Activated naive CD4-positive, alpha-beta T cell treated with anti-CD3 and anti-CD28 coated beads for 36 hours (primary cell): ENCODE measurements at regions of chr10 and their contacts with region 1.

Region 1: GRCh38 chr10:22988581-22989360 is 60.9 kb downstream of the ARMC3 start:
- DNase-seq: peak; percentile 82
- H3K4me3 Mint-ChIP-seq: no peak overlapping the region
- H3K27ac Mint-ChIP-seq: no peak overlapping the region
- H3K4me1 Mint-ChIP-seq: peaks cover 11% of the 10 kb centered on the region
- H3K27me3 Mint-ChIP-seq: no peaks in the 10 kb centered on the region

Region 2: GRCh38 chr10:21989453-21990154 is 999.2 kb before region 1 on chr10:
- CTCF ChIA-PET with region 1: interaction called, 13 read pairs
- intact Hi-C with region 1: loop called (anchors 1 kb)
- DNase-seq: peak; percentile 54
- H3K4me3 Mint-ChIP-seq: no peak overlapping the region
- H3K27ac Mint-ChIP-seq: no peak overlapping the region
- H3K4me1 Mint-ChIP-seq: no peaks in the 10 kb centered on the region
- H3K27me3 Mint-ChIP-seq: no peaks in the 10 kb centered on the region

Region 3: DNA sequence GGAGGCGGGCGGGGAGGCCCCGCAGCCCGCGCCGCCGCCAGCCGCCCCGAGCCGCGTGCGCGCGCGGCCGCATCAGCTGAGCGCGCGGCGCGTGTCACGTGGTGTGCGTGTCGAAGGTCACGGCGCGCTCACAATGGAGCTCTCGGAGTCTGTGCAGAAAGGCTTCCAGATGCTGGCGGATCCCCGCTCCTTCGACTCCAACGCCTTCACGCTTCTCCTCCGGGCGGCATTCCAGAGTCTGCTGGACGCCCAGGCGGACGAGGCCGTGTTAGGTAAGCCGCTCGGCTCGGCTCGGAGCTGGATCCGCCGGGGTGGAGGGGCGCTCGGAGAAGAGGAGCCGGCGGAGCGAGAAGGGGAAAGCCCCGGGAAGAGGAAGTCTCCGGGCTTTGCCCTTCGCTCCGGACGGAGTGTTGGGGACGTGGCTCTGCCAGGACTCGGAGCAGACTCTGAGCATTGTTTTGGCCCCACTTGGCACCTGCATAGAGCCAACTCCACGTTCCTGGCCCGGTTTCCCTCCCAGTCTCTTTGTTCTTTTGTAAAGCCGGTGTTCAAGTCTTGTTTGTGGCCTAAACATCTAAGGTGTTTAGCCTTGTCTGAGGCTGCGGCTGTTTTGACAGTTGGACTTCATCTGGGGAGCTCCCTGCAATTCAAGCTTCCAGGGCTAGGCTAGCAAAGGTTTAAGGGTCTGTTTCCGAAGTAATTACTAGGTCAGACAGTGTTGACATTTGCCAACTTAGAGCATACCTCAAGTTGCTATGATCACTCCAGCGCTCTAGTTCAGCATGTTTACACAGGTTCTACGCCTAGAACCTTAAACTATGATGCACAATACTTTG is 672.3 kb before region 1 on chr10 and contains the start of gene COMMD3:
- CTCF ChIA-PET with region 1: interaction called, 3 read pairs
- intact Hi-C with region 1: loop called (anchors 5 kb)
- DNase-seq: peak; percentile 80
- H3K4me3 Mint-ChIP-seq: peak within 1 kb of the TSS; percentile 91
- H3K27ac Mint-ChIP-seq: peak within 1 kb of the TSS; percentile 86
- H3K4me1 Mint-ChIP-seq: peaks cover 30% of the 10 kb centered on the region
- H3K27me3 Mint-ChIP-seq: peaks cover 18% of the 10 kb centered on the region
- total RNA-seq, gene COMMD3: 64.5 to 69.4 TPM

Region 4: GRCh38 chr10:22420787-22421517 is 567.8 kb before region 1 on chr10:
- CTCF ChIA-PET with region 1: no interaction called
- intact Hi-C with region 1: loop called (anchors 5 kb)
- DNase-seq: no peak
- H3K4me3 Mint-ChIP-seq: no peak overlapping the region
- H3K27ac Mint-ChIP-seq: no peak overlapping the region
- H3K4me1 Mint-ChIP-seq: no peaks in the 10 kb centered on the region
- H3K27me3 Mint-ChIP-seq: no peaks in the 10 kb centered on the region

Region 5: DNA sequence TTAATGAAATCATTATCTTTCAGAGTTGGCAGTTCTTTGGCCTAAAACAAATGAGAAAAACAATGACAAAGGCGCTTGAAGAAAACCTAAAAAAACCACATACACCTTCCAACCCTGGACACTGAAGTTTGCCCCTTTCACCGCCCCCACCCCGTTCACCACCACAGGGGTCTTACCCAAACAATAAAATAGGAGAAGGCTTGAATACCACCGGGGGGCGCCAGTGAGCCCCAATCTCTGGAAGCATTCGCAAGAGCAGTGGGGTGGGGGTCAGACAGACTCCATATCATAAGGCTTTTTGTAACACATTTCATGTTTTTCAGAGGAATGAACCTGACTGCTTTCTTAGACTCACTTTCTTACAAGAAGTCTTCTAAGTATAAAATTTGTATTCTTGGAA is 438.0 kb before region 1 on chr10:
- CTCF ChIA-PET with region 1: interaction called, 6 read pairs
- intact Hi-C with region 1: loop called (anchors 1 kb)
- DNase-seq: peak; percentile 77
- H3K4me3 Mint-ChIP-seq: no peak overlapping the region
- H3K27ac Mint-ChIP-seq: no peak overlapping the region
- H3K4me1 Mint-ChIP-seq: peaks cover 3% of the 10 kb centered on the region
- H3K27me3 Mint-ChIP-seq: no peaks in the 10 kb centered on the region

Region 6: GRCh38 chr10:22580711-22581110 is 408.1 kb before region 1 on chr10:
- CTCF ChIA-PET with region 1: interaction called, 40 read pairs
- intact Hi-C with region 1: no loop called
- DNase-seq: no peak
- H3K4me3 Mint-ChIP-seq: no peak overlapping the region
- H3K27ac Mint-ChIP-seq: no peak overlapping the region
- H3K4me1 Mint-ChIP-seq: peaks cover 23% of the 10 kb centered on the region
- H3K27me3 Mint-ChIP-seq: no peaks in the 10 kb centered on the region

Region 7: GRCh38 chr10:23067939-23068775 is 79.4 kb after region 1 on chr10:
- CTCF ChIA-PET with region 1: no interaction called
- intact Hi-C with region 1: loop called (anchors 1 kb)
- DNase-seq: peak; percentile 79
- H3K4me3 Mint-ChIP-seq: no peak overlapping the region
- H3K27ac Mint-ChIP-seq: no peak overlapping the region
- H3K4me1 Mint-ChIP-seq: no peaks in the 10 kb centered on the region
- H3K27me3 Mint-ChIP-seq: peaks cover 2% of the 10 kb centered on the region